SK-N-SH (cell line): ENCODE measurements at regions of chr4 and their contacts with region 1.

Region 1: DNA sequence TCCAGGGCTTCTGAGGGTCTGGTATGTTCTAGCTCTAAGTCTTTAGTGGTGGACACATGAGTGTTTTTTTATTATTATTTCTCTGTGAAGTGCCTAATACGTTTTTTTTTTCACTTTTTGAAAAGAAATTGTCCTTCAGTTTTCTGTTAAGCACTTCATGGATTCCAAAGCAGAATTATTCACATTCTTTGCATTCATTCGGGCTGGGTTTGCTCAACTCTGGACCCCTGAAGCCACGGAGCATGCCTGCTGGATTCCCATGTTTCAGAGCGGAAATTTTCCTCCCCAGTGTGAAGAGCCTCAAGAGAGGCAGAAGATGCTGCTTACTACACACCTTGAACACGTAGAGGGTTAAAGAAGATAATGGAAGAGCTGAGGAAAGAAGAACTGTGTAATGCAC is 107.5 kb downstream of the EGF start:
- DNase-seq: no peak
- H3K4me3 ChIP-seq: no peak overlapping the region
- H3K27ac ChIP-seq: no peak overlapping the region
- H3K4me1 ChIP-seq: no peaks in the 10 kb centered on the region
- H3K27me3 ChIP-seq: no peaks in the 10 kb centered on the region; the same call in 1 of the 2 replicates
- CTCF ChIP-seq: no peak
- EP300 ChIP-seq: no peak
- RAD21 ChIP-seq: no peak

Region 2: DNA sequence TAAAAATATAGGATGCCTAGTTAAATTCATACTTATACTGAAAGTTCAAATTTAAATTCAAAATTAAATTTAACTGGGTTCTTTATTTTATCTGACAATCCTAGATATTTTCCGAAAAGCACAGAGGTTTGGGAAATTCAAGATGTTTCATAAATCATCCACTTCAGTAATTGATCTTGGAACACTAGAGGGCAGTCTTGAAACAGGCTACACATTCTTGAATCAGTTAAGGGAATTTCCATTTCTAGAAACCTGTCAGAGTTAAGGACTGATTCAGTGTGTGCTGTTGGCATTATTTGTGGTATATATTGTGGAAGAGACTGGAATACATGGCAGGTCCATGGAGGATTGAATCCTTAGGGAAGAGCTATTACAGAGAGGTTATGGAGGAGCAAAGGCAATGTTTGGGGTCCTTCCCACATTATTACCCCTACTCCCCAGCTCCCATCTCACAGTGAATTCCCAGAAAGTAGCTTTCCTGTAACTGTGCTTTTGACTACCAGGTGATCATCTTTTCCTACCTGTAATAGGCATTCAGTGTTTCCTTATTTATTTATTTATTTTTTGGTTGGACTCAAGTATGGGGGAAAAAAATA is 14.6 kb before region 1 on chr4:
- CTCF ChIA-PET with region 1: interaction called, 11 read pairs
- POLR2A ChIA-PET with region 1: no interaction called
- DNase-seq: peak; percentile 52
- H3K4me3 ChIP-seq: no peak overlapping the region
- H3K27ac ChIP-seq: no peak overlapping the region
- H3K4me1 ChIP-seq: no peaks in the 10 kb centered on the region
- H3K27me3 ChIP-seq: no peaks in the 10 kb centered on the region
- CTCF ChIP-seq: peak; percentile 90
- EP300 ChIP-seq: no peak
- RAD21 ChIP-seq: peak; percentile 96